ENCODE measurements at regions of chr19 and their contacts with region 1.

Region 1: GRCh38 chr19:48795055-48795684 is 15.7 kb downstream of the BCAT2 start:
- DNase-seq: peak; percentile 91
- ATAC-seq: peak; percentile 99
- H3K4me3 Mint-ChIP-seq: peak overlapping the region; percentile 70
- H3K27ac Mint-ChIP-seq: peak overlapping the region; percentile 82
- H3K4me1 Mint-ChIP-seq: peaks cover 7% of the 10 kb centered on the region
- H3K27me3 Mint-ChIP-seq: no peaks in the 10 kb centered on the region

Region 2: GRCh38 chr19:48720613-48721296 is 74.4 kb before region 1 on chr19:
- CTCF ChIA-PET with region 1: interaction called, 5 read pairs
- POLR2A ChIA-PET with region 1: no interaction called
- intact Hi-C with region 1: loop called in 1 of 2 experiments (anchors 1 kb)
- DNase-seq: peak; percentile 97
- ATAC-seq: peak; percentile 96
- H3K4me3 Mint-ChIP-seq: peak overlapping the region; percentile 80
- H3K27ac Mint-ChIP-seq: peak overlapping the region; percentile 97
- H3K4me1 Mint-ChIP-seq: peaks cover 14% of the 10 kb centered on the region
- H3K27me3 Mint-ChIP-seq: no peaks in the 10 kb centered on the region

Region 3: DNA sequence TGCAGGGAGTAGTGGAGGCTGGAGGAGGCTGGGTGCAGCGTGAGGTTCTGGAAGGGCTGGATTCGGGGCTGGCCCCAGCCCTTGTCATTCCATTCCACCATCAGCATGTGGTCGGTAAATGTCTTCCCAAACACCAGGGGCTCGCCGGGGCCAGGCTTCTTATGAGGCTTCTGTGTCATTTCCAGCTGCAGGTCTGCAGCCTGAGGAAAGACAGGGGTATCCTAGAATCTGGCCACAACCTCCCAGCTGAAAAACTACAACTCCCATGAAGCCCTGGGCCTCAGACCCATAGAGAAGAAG is 11.3 kb after region 1 on chr19:
- CTCF ChIA-PET with region 1: interaction called, 12 read pairs
- POLR2A ChIA-PET with region 1: interaction called, 4 read pairs
- intact Hi-C with region 1: loop called in 1 of 2 experiments (anchors 1 kb)
- DNase-seq: peak; percentile 66
- ATAC-seq: peak; percentile 65
- H3K4me3 Mint-ChIP-seq: no peak overlapping the region
- H3K27ac Mint-ChIP-seq: no peak overlapping the region
- H3K4me1 Mint-ChIP-seq: peaks cover 18% of the 10 kb centered on the region
- H3K27me3 Mint-ChIP-seq: no peaks in the 10 kb centered on the region

Region 4: DNA sequence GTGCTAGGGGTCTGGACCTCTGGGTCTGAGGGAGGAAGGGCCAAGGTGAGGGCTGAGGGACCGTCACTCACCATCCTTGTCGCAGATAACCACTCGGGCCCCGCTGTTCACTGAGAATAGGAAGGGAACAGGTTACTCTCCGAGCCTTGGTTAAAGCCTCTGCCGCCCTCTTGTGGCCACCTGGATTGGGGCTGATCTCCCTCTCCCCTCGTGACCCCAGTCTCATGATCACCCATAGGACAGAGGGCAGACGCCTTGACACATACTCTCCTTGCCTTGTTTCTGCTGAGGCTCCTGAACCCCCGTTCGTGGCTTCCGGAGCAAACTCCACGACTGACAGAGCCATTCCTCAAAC is 40.5 kb after region 1 on chr19:
- CTCF ChIA-PET with region 1: interaction called, 44 read pairs
- POLR2A ChIA-PET with region 1: interaction called, 4 read pairs
- intact Hi-C with region 1: loop called (anchors 1 kb)
- DNase-seq: peak; percentile 98
- ATAC-seq: peak; percentile 99
- H3K4me3 Mint-ChIP-seq: peak overlapping the region; percentile 71
- H3K27ac Mint-ChIP-seq: peak overlapping the region; percentile 83
- H3K4me1 Mint-ChIP-seq: peaks cover 18% of the 10 kb centered on the region
- H3K27me3 Mint-ChIP-seq: no peaks in the 10 kb centered on the region

Region 5: GRCh38 chr19:48872182-48872883 is 77.2 kb after region 1 on chr19 and contains the start of gene PPP1R15A:
- CTCF ChIA-PET with region 1: no interaction called
- POLR2A ChIA-PET with region 1: no interaction called
- intact Hi-C with region 1: loop called in 1 of 2 experiments (anchors 1 kb)
- DNase-seq: peak; percentile 99
- ATAC-seq: peak; percentile 50
- H3K4me3 Mint-ChIP-seq: peak within 1 kb of the TSS; percentile 98
- H3K27ac Mint-ChIP-seq: peak within 1 kb of the TSS; percentile 99
- H3K4me1 Mint-ChIP-seq: peaks cover 41% of the 10 kb centered on the region
- H3K27me3 Mint-ChIP-seq: no peaks in the 10 kb centered on the region
- total RNA-seq, gene PPP1R15A: 51.6 to 62.4 TPM

Region 6: DNA sequence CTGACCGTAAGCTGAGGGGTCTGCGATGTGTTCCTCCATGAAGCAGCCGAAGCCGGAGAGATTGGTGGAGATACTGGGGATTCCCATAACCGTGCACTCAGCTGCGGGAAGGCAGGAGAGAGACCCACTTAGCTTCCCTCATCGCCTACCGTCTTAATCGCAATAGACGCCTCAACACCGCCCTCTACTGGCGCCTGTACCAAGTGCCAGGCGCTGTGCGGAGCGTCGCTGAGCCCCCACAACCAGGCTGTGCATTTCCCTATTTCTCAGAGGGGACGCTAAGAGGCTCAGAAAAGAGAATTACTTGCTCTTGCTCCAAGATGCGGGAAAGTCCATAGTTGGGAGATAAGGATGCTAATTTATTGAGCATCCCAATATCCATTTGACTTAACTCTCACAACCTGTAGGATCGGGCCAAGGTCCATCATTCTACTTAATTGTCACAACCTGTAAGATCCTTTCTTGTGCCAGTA is 175.8 kb after region 1 on chr19:
- CTCF ChIA-PET with region 1: interaction called, 19 read pairs
- POLR2A ChIA-PET with region 1: interaction called, 3 read pairs
- intact Hi-C with region 1: loop called in 1 of 2 experiments (anchors 1 kb)
- DNase-seq: peak; percentile 91
- ATAC-seq: peak; percentile 84
- H3K4me3 Mint-ChIP-seq: no peak overlapping the region
- H3K27ac Mint-ChIP-seq: no peak overlapping the region
- H3K4me1 Mint-ChIP-seq: peaks cover 17% of the 10 kb centered on the region
- H3K27me3 Mint-ChIP-seq: no peaks in the 10 kb centered on the region